Activated T-helper 1 cell treated with anti-CD3 and anti-CD28 coated beads, Interleukin-12 subunit alpha, Interleukin-12 subunit beta, Interleukin-2, Interleukin-4 antibody, amounts not matched to agents 30 ng/mL and 10 ng/mL and 1 ng/mL, durations not matched to agents 14 hours and 24 hours and 36 hours (primary cell): ENCODE measurements at regions of chr2 and their contacts with region 1.

Region 1: GRCh38 chr2:117470311-117471095 is 344.0 kb upstream of the DDX18 start:
- DNase-seq: peak; percentile 1
- H3K4me3 Mint-ChIP-seq: no peak overlapping the region
- H3K27ac Mint-ChIP-seq: no peak overlapping the region
- H3K4me1 Mint-ChIP-seq: no peaks in the 10 kb centered on the region
- H3K27me3 Mint-ChIP-seq: no peaks in the 10 kb centered on the region

Region 2: DNA sequence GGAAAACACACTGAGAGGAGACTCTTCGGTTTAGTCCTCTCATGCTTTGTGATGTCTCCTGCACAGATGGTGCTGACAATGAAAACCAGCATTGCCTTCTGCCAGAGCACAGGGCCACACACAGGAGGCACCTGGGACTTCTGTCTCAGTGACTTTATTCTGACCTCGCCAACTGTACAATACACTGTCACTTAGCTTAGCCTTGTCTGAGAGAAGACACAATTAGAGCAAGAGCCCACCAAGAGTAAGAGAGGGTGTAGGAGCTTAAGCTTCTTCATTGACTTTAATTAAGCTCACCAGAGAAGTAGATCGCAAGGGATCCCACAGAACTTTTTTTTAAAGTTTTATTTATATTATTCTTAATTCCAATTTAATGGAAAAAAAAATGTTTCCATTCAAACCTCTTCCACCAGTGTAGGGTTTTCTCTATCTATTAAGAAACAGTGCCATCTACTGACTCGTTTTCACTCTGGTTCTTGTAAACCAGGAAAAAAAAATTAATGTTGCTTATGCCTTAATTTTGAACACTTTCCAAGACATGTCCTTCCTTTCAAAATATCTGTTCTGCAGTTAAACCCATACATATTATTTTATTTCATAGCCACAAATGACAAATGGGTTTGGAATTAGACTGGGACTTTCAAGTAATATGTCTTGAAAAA is 301.6 kb after region 1 on chr2:
- intact Hi-C with region 1: loop called (anchors 5 kb)
- DNase-seq: no peak
- H3K4me3 Mint-ChIP-seq: no peak overlapping the region
- H3K27ac Mint-ChIP-seq: no peak overlapping the region
- H3K4me1 Mint-ChIP-seq: no peaks in the 10 kb centered on the region
- H3K27me3 Mint-ChIP-seq: no peaks in the 10 kb centered on the region

Region 3: GRCh38 chr2:117785740-117786139 is 315.2 kb after region 1 on chr2:
- intact Hi-C with region 1: loop called (anchors 1 kb)
- DNase-seq: no peak
- H3K4me3 Mint-ChIP-seq: no peak overlapping the region
- H3K27ac Mint-ChIP-seq: no peak overlapping the region
- H3K4me1 Mint-ChIP-seq: no peaks in the 10 kb centered on the region
- H3K27me3 Mint-ChIP-seq: peaks cover 2% of the 10 kb centered on the region